Panc1 (cell line): ENCODE measurements at regions of chr9 and their contacts with region 1.

Region 1: DNA sequence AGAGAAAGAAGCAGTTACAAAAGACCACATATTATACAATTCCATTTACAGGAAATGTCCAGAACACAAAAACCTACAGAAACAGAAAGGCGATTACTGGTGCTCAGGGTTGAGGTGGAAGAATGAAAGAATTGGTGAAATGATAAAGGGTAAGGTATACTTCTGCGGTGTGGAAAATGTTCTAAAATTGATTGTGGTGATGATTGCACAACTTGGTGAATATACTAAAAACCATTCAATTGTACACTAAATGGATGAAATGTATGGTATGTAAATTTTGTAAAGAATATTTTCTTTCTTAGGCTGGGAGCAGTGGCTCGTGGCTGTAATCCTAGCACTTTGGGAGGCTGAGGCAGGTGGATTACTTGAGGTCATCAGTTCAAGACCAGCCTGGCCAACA is 72.3 kb downstream of the UBAP2 start:
- DNase-seq: no peak
- ATAC-seq: no peak
- H3K4me3 ChIP-seq: no peak overlapping the region
- H3K27ac ChIP-seq: no peak overlapping the region
- H3K4me1 ChIP-seq: no peaks in the 10 kb centered on the region
- H3K27me3 ChIP-seq: no peaks in the 10 kb centered on the region
- CTCF ChIP-seq: no peak

Region 2: GRCh38 chr9:33939924-33940874 is 36.2 kb before region 1 on chr9:
- CTCF ChIA-PET with region 1: no interaction called
- POLR2A ChIA-PET with region 1: interaction called, 10 read pairs
- in situ Hi-C with region 1: no loop called
- intact Hi-C with region 1: no loop called
- DNase-seq: no peak
- ATAC-seq: peak; percentile 74
- H3K4me3 ChIP-seq: no peak overlapping the region
- H3K27ac ChIP-seq: no peak overlapping the region
- H3K4me1 ChIP-seq: peaks cover 16% of the 10 kb centered on the region
- H3K27me3 ChIP-seq: no peaks in the 10 kb centered on the region
- CTCF ChIP-seq: no peak

Region 3: GRCh38 chr9:34178520-34179212 is 202.3 kb after region 1 on chr9 and contains the start of gene UBAP1:
- CTCF ChIA-PET with region 1: no interaction called
- POLR2A ChIA-PET with region 1: interaction called, 12 read pairs
- in situ Hi-C with region 1: no loop called
- intact Hi-C with region 1: no loop called
- DNase-seq: peak; percentile 83
- ATAC-seq: peak; percentile 99
- H3K4me3 ChIP-seq: peak within 1 kb of the TSS; percentile 63 to 85
- H3K27ac ChIP-seq: peak within 1 kb of the TSS; percentile 92
- H3K4me1 ChIP-seq: peaks cover 4% of the 10 kb centered on the region; the same call in 1 of the 2 replicates
- H3K27me3 ChIP-seq: no peaks in the 10 kb centered on the region
- CTCF ChIP-seq: no peak
- total RNA-seq, gene UBAP1: 55.3 TPM

Region 4: DNA sequence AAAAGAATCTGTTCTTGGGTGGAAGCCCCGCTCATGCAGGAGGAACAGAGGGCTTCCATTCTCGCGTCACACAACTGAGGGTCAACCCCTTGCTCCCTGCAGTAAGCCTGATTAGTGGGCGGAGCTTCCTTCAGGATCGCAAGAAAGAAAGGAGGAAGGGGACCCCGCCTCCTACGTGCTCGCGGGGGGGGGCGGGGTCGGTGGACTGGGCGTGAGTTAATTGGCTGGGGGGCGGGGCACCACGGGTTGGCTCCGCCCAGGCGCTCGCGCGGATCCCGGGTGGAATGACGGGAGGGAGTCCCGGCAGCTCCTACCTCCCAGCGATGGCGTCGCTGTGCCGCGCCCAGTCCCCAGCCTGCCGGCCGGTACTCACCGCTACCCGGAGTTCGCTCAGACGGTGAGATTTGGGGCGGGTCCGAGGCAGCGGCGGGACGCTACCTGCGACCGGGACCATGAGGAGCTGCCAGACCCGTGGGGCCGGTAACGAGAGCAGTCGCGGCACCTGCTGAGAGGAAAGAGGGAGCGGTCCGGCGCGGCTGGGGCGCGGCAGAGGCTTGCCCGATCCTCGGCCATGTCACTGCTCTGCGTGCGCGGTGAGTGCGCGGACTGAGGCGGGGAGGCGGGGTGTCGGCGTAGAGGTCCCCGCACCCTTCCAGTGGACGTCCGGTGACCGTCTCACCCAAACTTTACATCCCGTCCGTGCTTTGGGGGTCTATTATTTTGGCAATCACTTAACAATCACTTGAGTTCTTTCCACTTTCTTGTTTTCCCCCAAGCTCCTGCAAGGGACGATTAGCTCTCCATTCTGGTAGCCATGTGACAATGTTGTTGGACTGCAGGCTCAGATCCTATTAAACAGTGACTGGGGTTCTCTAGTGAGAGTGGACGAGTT is 1185.5 kb after region 1 on chr9 and contains the start of gene UNC13B:
- CTCF ChIA-PET with region 1: no interaction called
- POLR2A ChIA-PET with region 1: interaction called, 12 read pairs
- in situ Hi-C with region 1: no loop called
- intact Hi-C with region 1: no loop called
- DNase-seq: peak; percentile 56
- ATAC-seq: peak; percentile 98
- H3K4me3 ChIP-seq: peak within 1 kb of the TSS; percentile 70 to 90
- H3K27ac ChIP-seq: peak within 1 kb of the TSS; percentile 87
- H3K4me1 ChIP-seq: peaks cover 15% of the 10 kb centered on the region
- H3K27me3 ChIP-seq: no peaks in the 10 kb centered on the region
- CTCF ChIP-seq: peak; percentile 35; the same call in 1 of the 2 replicates
- total RNA-seq, gene UNC13B: 35.2 TPM